ENCODE measurements at regions of chr3 and their contacts with region 1.

Region 1: DNA sequence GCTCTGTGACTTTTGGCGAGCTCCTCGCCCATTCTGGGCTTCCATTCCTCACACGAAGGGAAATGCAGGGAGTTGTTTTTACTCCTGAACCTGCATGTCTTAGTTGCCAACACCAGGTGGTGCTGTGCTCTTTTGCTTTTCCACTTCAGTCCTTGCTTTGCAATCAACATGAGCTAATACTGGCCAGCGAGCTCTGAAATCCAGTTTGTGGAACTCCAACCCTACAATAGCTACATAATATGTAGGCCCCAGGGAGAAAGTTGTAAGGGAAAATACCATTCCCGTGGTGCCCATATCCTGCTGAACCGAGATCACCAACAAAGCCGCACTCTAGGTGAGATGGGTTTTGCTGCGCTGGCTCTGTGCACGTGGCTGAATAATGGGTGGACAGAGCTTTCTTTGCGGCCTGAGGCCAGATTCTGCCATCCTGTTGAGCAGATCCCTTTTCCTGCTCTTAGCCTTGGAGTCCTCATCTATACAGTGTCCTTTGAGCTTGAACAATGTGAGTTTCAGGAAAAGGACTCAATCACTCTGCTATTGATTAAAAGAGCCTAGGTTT is 25.0 kb downstream of the LSM3 start:
- DNase-seq: peak; percentile 48
- ATAC-seq: peak; percentile 76
- H3K4me3 Mint-ChIP-seq: no peak overlapping the region
- H3K27ac Mint-ChIP-seq: no peak overlapping the region
- H3K4me1 Mint-ChIP-seq: no peaks in the 10 kb centered on the region
- H3K27me3 Mint-ChIP-seq: no peaks in the 10 kb centered on the region
- CTCF ChIP-seq: peak; percentile 85

Region 2: GRCh38 chr3:14188041-14188754 is 15.4 kb before region 1 on chr3:
- CTCF ChIA-PET with region 1: interaction called, 26 read pairs
- POLR2A ChIA-PET with region 1: no interaction called
- intact Hi-C with region 1: no loop called
- DNase-seq: no peak
- ATAC-seq: peak; percentile 73
- H3K4me3 Mint-ChIP-seq: no peak overlapping the region
- H3K27ac Mint-ChIP-seq: peak overlapping the region; percentile 13
- H3K4me1 Mint-ChIP-seq: peaks cover 62% of the 10 kb centered on the region
- H3K27me3 Mint-ChIP-seq: no peaks in the 10 kb centered on the region
- CTCF ChIP-seq: no peak

Region 3: GRCh38 chr3:14222900-14223594 is 19.4 kb after region 1 on chr3:
- CTCF ChIA-PET with region 1: interaction called, 76 read pairs
- POLR2A ChIA-PET with region 1: no interaction called
- intact Hi-C with region 1: no loop called
- DNase-seq: no peak
- ATAC-seq: no peak
- H3K4me3 Mint-ChIP-seq: no peak overlapping the region
- H3K27ac Mint-ChIP-seq: no peak overlapping the region
- H3K4me1 Mint-ChIP-seq: no peaks in the 10 kb centered on the region
- H3K27me3 Mint-ChIP-seq: peaks cover 11% of the 10 kb centered on the region
- CTCF ChIP-seq: no peak

Region 4: DNA sequence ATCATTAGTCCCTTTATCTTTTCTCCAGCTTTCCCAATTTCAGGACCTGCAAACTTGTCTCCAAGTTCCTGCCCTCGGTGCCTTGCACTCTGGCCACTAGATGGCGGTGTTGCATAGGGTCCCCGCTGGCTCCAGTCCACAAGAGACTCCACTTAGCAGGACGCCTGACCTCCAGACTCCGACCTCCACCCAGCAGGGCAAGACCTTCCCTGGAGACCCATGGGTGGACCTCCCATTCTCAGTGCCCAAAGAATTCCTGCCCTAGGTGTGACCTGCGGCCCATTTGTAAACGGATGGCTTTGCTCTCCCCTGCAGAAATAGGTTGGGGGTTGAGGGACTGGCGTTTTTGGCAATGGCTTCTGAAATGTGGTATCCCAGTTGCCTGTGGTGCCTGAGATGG is 57.6 kb after region 1 on chr3:
- CTCF ChIA-PET with region 1: interaction called, 11 read pairs
- POLR2A ChIA-PET with region 1: no interaction called
- intact Hi-C with region 1: no loop called
- DNase-seq: peak; percentile 81
- ATAC-seq: peak; percentile 65
- H3K4me3 Mint-ChIP-seq: no peak overlapping the region
- H3K27ac Mint-ChIP-seq: no peak overlapping the region
- H3K4me1 Mint-ChIP-seq: no peaks in the 10 kb centered on the region
- H3K27me3 Mint-ChIP-seq: no peaks in the 10 kb centered on the region
- CTCF ChIP-seq: peak; percentile 97

Measured in activated CD8-positive, alpha-beta T cell treated with anti-CD3 and anti-CD28 coated beads for 36 hours (primary cell).